Heart left ventricle (tissue), 16 donors: ENCODE measurements at regions of chr1 and their contacts with region 1.

Region 1: GRCh38 chr1:119948342-119949214 is 52.3 kb upstream of the ADAM30 start:
- DNase-seq: peak; percentile 71 to 86 (median 74)
- ATAC-seq: peak; percentile 76 to 89 (median 85)
- H3K4me3 ChIP-seq: no peak overlapping the region
- H3K27ac ChIP-seq: no peak overlapping the region
- H3K4me1 ChIP-seq: peaks cover 0 to 13% (median 2%) of the 10 kb centered on the region in 12 donors
- H3K27me3 ChIP-seq: no peaks in the 10 kb centered on the region
- CTCF ChIP-seq: peak; percentile 65 to 86 (median 77)
- POLR2A ChIP-seq: no peak

Region 2: DNA sequence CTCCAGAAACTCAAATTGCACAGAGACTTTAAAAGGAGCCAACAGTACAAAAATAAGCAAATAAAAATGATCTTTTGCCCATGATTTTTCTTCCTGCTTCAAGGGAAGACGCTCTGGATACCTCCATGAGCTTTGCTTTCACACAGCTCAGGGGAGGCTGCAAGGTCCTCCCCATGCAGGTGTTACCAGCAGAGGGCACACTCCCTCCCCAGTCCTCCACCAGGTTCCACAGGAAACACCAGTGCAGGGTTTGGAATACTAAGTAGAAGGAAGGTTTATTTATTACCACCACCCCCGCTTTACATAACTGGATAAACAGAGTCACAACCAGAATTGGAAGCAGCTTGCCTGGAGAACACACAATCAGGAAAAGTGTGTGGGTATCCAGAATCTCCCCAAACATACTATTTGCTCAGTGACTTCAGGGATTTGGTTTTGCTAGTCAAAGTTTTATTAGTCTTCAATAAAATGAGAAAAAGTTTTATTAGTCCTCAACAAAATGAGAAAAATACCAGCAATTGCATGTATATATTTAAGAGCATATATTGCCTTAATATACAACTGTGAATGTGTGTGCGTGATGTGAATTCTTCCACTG is 404.3 kb before region 1 on chr1:
- intact Hi-C with region 1: no loop called
- DNase-seq: no peak
- ATAC-seq: no peak
- H3K4me3 ChIP-seq: no peak overlapping the region
- H3K27ac ChIP-seq: no peak overlapping the region
- H3K4me1 ChIP-seq: no peaks in the 10 kb centered on the region
- H3K27me3 ChIP-seq: no peaks in the 10 kb centered on the region
- CTCF ChIP-seq: peak in 6 of 12 donors; percentile 8 to 19 (median 13)
- POLR2A ChIP-seq: no peak

Region 3: GRCh38 chr1:119732465-119733168 is 216.0 kb before region 1 on chr1:
- intact Hi-C with region 1: no loop called
- DNase-seq: no peak
- ATAC-seq: peak in 1 of 4 donors; percentile 30
- H3K4me3 ChIP-seq: no peak overlapping the region
- H3K27ac ChIP-seq: peak overlapping the region in 1 of 12 donors; percentile 13
- H3K4me1 ChIP-seq: peaks cover 0 to 22% (median 15%) of the 10 kb centered on the region in 12 donors
- H3K27me3 ChIP-seq: no peaks in the 10 kb centered on the region
- CTCF ChIP-seq: no peak
- POLR2A ChIP-seq: no peak

Region 4: DNA sequence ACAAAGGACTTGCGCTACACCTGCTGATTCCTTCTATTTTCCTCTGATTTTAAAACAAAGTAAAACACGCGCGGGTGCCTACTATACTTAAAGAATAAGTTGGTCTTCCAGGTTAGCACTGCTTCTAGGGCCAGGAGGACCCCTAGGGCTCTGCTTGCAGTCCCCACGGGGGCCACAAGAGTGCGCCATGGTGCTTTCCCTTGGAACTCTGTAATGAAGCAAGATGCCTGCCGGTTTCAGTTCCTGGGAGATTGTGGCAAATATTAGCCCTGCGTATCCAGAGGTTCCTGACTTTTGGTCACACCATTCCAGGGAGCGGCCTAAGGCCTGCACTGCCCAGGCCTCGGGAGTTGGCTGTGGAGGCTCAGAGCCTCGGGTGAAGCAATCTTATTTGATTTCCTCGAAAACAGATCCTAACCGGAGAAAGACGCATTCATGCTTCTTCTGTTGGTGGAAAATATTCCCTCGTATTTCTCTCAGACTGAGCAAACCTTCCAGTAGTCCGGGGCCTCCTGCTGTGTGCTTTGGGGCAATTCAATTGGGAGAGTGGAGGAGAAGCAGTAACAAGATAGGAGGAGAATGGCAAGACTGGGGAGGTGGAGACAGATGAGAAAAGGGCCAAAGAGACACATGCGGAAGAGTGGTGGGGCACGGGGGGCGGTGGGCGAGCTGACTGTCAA is 77.5 kb before region 1 on chr1:
- intact Hi-C with region 1: loop called in 1 of 10 experiments (anchors 10 kb)
- DNase-seq: peak; percentile 61 to 84 (median 71)
- ATAC-seq: peak; percentile 60 to 87 (median 74)
- H3K4me3 ChIP-seq: peak overlapping the region in 5 of 12 donors; percentile 4 to 48 (median 39)
- H3K27ac ChIP-seq: peak overlapping the region in 1 of 12 donors; percentile 35
- H3K4me1 ChIP-seq: peaks cover 0 to 15% (median 0%) of the 10 kb centered on the region in 12 donors
- H3K27me3 ChIP-seq: no peaks in the 10 kb centered on the region
- CTCF ChIP-seq: peak; percentile 70 to 94 (median 84)
- POLR2A ChIP-seq: no peak